ENCODE measurements at regions of chr16 and their contacts with region 1.

Region 1: GRCh38 chr16:66894948-66895688 is 14.8 kb downstream of the PDP2 start:
- DNase-seq: peak; percentile 34 to 84 (median 78)
- H3K4me3 ChIP-seq: no peak overlapping the region
- H3K27ac ChIP-seq: peak overlapping the region in 13 of 59 donors; percentile 0 to 66 (median 36)
- H3K27me3 ChIP-seq: no peaks in the 10 kb centered on the region
- CTCF ChIP-seq: peak; percentile 35 to 88 (median 77)

Region 2: GRCh38 chr16:66947302-66948065 is 52.4 kb after region 1 on chr16:
- intact Hi-C with region 1: loop called in 1 of 2 experiments (anchors 10 kb)
- DNase-seq: peak; percentile 66 to 92 (median 80)
- H3K4me3 ChIP-seq: peak overlapping the region; percentile 41 to 75 (median 61)
- H3K27ac ChIP-seq: peak overlapping the region in 7 of 59 donors; percentile 4 to 71 (median 41)
- H3K27me3 ChIP-seq: no peaks in the 10 kb centered on the region
- CTCF ChIP-seq: peak; percentile 86 to 98 (median 94)

Region 3: GRCh38 chr16:67459066-67459860 is 564.1 kb after region 1 on chr16:
- intact Hi-C with region 1: no loop called
- DNase-seq: no peak
- H3K4me3 ChIP-seq: peak overlapping the region in 1 of 59 donors; percentile 13
- H3K27ac ChIP-seq: peak overlapping the region in 36 of 59 donors; percentile 1 to 67 (median 41)
- H3K27me3 ChIP-seq: no peaks in the 10 kb centered on the region
- CTCF ChIP-seq: no peak

Measured in dorsolateral prefrontal cortex (tissue), 120 donors.